ENCODE measurements at regions of chr20 and their contacts with region 1.

Region 1: DNA sequence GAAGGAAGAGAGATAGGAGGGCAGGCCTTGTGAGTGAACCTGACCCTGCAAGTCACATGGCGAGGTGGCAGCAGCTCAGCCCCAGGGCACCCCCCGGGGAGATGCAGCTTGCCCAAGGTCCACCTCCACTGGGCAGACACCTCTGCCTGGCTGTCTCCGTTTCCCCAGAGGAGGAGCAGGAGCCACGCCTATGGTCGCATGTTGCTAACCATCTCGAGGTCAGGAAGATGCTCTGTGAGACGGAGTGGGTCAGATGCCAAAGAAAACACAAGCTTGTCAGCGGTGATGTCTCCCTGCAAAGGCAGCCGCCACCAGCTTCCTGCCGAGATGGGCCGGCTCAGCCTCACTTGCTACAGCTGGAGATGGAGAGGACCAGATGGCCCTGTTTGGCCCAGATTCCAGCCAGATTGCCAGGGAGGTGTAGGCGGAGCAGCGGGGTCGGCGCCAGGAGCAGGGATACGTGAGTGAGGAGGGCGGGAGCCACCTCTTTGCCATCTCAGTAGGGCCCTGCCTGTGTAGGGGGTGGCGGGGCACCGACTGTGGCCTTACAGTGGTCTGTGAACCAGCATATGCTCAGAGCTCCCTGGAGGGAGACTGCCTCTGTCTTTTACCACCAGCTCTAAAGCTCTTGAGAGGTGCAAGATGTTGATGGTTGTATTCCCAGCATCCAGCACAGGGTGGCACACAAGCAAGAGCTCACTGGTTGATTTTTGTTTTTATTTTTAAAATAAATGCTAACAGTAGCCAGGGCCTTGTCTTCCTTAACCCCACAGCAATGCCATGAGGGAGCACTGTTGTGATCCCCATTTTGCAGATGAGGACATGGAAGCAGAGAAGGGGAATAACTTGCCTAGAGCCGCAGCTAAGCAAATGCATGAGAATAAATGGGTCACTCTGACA is 42.9 kb upstream of the FAM83D start:
- DNase-seq: no peak
- H3K4me3 ChIP-seq: no peak overlapping the region
- H3K27me3 ChIP-seq: no peaks in the 10 kb centered on the region; the same call in 1 of the 2 replicates
- CTCF ChIP-seq: no peak

Region 2: DNA sequence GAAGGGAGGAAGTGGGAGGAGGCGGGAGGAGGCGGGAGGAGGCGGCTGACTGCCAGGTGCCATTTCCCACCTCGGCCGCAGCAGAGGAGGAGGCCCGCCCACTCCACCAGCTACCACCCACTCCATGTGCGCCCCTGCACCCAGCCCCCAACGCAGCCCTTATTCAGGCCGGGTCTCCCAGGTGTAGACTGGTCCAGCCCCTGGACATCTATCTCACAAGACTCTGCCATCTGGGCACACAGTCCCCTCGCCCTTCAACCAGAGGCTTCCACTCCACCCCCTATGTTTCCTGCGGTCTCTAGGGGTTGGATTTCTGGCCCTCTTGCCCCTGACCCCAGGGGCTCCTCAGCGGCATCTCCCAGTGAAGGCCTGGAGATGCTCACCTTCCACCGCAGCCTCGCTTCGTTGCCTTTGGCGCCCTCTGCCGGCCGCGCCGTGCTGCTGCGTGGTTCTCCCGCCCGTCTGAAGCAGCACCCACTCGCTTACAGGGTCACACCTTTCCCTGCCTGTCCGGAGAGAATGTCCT is 10.3 kb after region 1 on chr20:
- CTCF ChIA-PET with region 1: interaction called, 25 read pairs
- POLR2A ChIA-PET with region 1: no interaction called
- DNase-seq: no peak
- H3K4me3 ChIP-seq: no peak overlapping the region
- H3K27me3 ChIP-seq: peaks cover 24% of the 10 kb centered on the region
- CTCF ChIP-seq: peak; percentile 97